Ovary (tissue), 10 donors: ENCODE measurements at regions of chr2 and their contacts with region 1.

Region 1: GRCh38 chr2:203238704-203239526 is at the start of gene CYP20A1:
- DNase-seq: peak; percentile 96 to 98 (median 96)
- H3K4me3 ChIP-seq: peak within 1 kb of the TSS; percentile 89
- H3K27ac ChIP-seq: peak within 1 kb of the TSS; percentile 96 to 97
- H3K4me1 ChIP-seq: peaks cover 10% of the 10 kb centered on the region
- H3K27me3 ChIP-seq: no peaks in the 10 kb centered on the region
- CTCF ChIP-seq: peak; percentile 22 to 70 (median 47)
- EP300 ChIP-seq: no peak
- POLR2A ChIP-seq: peak; percentile 83
- total RNA-seq, gene CYP20A1: 31.4 to 51.0 (median 37.9) TPM

Region 2: DNA sequence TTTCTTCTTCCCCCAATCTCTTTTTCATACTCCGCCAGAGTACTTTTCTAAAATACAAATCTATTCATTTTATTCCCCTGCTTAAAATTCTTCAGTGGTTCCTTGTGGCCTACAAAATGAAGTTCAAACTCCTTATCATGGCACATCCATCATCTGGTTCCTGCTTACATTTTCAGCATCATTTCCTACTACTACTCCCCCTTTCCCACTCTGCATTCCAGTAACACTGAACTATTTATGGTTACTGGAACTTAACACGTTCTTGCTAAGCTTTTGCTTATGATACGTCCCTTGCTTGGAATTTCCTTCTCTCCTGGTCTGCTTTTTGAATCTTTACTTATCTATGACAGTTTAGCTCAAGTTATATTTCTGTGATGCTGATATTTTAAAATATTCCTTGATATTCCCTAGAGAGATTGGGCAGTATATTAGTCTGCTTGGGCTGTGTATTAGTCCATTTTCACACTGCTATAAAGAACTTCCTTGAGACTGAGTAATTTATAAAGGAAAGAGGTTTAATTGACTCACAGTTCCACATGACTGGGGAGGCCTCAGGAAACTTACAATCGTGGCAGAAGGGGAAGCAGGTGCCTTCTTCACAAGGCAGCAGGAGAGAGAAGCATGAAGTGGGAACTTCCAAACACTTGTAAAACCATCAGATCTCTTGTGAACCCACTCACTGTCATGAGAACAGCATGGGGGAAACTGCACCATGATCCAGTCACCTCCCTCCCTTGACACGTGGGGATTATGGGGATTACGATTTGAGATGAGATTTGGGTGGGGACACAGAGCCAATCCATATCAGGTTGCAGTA is 809.5 kb before region 1 on chr2:
- intact Hi-C with region 1: no loop called
- DNase-seq: no peak
- H3K4me3 ChIP-seq: no peak overlapping the region
- H3K27ac ChIP-seq: peak overlapping the region in 1 of 2 donors; percentile 54
- H3K4me1 ChIP-seq: peaks cover 2% of the 10 kb centered on the region
- H3K27me3 ChIP-seq: no peaks in the 10 kb centered on the region
- CTCF ChIP-seq: no peak
- EP300 ChIP-seq: peak; percentile 88
- POLR2A ChIP-seq: no peak

Region 3: GRCh38 chr2:203209538-203209937 is 29.4 kb before region 1 on chr2:
- intact Hi-C with region 1: no loop called
- DNase-seq: no peak
- H3K4me3 ChIP-seq: no peak overlapping the region
- H3K27ac ChIP-seq: no peak overlapping the region
- H3K4me1 ChIP-seq: no peaks in the 10 kb centered on the region
- H3K27me3 ChIP-seq: no peaks in the 10 kb centered on the region
- CTCF ChIP-seq: no peak
- EP300 ChIP-seq: no peak
- POLR2A ChIP-seq: no peak

Region 4: GRCh38 chr2:203327901-203328759 is 89.2 kb after region 1 on chr2 and contains the start of gene ABI2:
- intact Hi-C with region 1: loop called in 1 of 4 experiments (anchors 2 kb)
- DNase-seq: peak; percentile 83 to 92 (median 90)
- H3K4me3 ChIP-seq: peak within 1 kb of the TSS; percentile 97
- H3K27ac ChIP-seq: peak within 1 kb of the TSS; percentile 48 to 77
- H3K4me1 ChIP-seq: no peaks in the 10 kb centered on the region
- H3K27me3 ChIP-seq: no peaks in the 10 kb centered on the region
- CTCF ChIP-seq: no peak
- EP300 ChIP-seq: no peak
- POLR2A ChIP-seq: peak; percentile 39
- total RNA-seq, gene ABI2: 37.4 to 91.6 (median 71.1) TPM

Region 5: DNA sequence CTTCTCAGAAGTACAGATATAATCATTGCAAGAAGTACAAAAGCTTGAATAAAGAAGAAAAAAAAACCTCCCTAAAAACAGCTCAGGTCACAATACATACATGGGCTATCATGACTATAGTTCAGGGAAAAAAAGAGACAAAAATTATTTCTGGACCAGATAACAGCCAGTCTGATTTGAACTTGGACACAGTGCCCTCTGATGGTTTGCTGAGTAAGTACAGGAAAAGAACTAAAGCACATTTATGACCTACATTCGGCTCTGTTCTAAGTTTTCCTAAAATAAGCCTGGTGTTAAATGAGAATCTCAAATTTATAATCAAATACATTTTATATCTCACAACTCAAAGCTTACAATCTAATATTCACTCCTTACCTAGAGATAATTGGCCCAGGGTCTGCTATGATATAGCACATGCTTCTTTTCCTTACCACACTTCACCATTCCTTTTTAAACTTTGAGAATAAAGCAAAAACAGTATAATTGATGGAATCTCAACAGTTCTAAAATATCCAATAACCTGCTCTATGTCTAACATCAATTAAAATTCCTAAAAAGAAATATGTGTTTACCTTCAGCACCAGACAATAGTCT is 215.0 kb after region 1 on chr2:
- intact Hi-C with region 1: loop called in 1 of 4 experiments (anchors 5 kb)
- DNase-seq: peak in 1 of 5 donors; percentile 30
- H3K4me3 ChIP-seq: no peak overlapping the region
- H3K27ac ChIP-seq: no peak overlapping the region
- H3K4me1 ChIP-seq: no peaks in the 10 kb centered on the region
- H3K27me3 ChIP-seq: no peaks in the 10 kb centered on the region
- CTCF ChIP-seq: peak; percentile 56 to 73 (median 57)
- EP300 ChIP-seq: no peak
- POLR2A ChIP-seq: no peak